HCT116 (cell line): ENCODE measurements at regions of chr16 and their contacts with region 1.

Region 1: DNA sequence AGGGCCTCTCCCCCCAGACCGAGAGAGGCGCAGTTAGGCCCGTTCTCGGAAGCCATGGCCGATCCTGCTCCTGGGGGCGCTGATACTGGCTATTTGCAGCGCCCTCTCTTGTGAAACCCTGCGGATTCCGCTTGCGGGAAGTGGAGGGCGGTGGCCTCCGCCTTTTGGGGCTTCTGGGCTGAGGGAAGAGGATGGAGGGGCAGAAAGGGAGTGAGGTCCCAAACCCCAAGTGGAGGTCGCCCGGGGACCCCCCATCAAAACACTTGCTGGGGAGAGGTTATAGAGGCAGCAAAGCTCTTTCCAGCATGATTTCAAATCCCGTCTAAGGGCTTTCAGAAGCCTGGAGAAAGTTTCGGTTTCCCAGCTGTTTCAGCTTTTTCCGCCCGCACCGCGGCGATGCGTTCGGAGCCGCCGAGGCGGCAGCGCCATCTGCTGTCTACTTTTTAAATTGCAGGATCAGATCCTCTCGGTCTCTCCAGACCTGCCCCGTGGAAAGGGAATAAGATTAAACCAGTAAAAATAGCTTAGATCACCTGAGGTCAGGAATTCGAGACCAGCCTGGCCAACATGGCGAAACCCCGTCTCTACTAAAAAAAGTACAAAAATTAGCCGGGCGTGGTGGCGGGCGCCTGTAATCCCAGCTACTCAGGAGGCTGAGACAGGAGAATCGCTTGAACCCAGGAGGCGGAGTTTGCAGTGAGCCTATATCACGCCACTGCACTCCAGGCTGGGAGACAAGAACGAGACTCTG is 15.8 kb downstream of the SNX20 start:
- DNase-seq: peak; percentile 41
- ATAC-seq: peak; percentile 93
- H3K4me3 ChIP-seq: peak overlapping the region; percentile 35 to 48
- H3K27ac ChIP-seq: no peak overlapping the region; the same call in 1 of the 2 replicates
- H3K4me1 ChIP-seq: peaks cover 0 to 5% of the 10 kb centered on the region in 2 experiments; a peak in 1 of 4 replicates
- H3K27me3 ChIP-seq: no peaks in the 10 kb centered on the region
- CTCF ChIP-seq: peak; percentile 78 to 90 (median 81)
- POLR2A ChIP-seq: no peak
- RAD21 ChIP-seq: peak; percentile 93

Region 2: DNA sequence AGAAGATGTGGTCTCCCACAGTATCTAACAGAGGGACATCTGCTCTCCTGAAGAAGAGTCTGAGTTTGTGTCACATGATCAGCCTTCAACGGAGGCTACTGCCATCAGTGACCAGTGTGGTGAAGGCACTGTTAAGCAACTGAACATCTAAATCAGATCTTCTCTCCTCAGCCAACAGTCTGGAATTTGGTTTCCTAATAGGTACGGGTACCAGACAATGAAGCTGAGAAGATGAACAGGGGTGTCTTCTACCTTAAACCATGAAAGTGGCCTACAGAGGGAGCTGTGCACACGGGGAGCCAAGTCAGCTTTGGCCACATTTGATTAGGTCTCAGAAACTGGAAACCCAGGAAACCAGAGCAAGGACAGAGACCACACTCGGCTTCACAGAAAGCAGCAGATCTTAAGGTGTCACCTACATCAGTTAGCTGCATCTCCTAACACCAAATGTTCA is 338.3 kb before region 1 on chr16:
- CTCF ChIA-PET with region 1: interaction called, 11 read pairs
- POLR2A ChIA-PET with region 1: no interaction called
- RAD21 ChIA-PET with region 1: interaction called in 1 of 2 experiments, 4 read pairs
- intact Hi-C with region 1: loop called (anchors 5 kb)
- DNase-seq: peak; percentile 31
- ATAC-seq: peak; percentile 81
- H3K4me3 ChIP-seq: no peak overlapping the region
- H3K27ac ChIP-seq: no peak overlapping the region
- H3K4me1 ChIP-seq: no peaks in the 10 kb centered on the region
- H3K27me3 ChIP-seq: no peaks in the 10 kb centered on the region
- CTCF ChIP-seq: peak; percentile 26 to 71 (median 67); a peak in 5 of 6 replicates
- POLR2A ChIP-seq: no peak
- RAD21 ChIP-seq: peak; percentile 57

Region 3: GRCh38 chr16:50373780-50374179 is 291.5 kb before region 1 on chr16:
- CTCF ChIA-PET with region 1: interaction called, 28 read pairs
- POLR2A ChIA-PET with region 1: no interaction called
- RAD21 ChIA-PET with region 1: interaction called in 1 of 2 experiments, 4 read pairs
- intact Hi-C with region 1: loop called (anchors 1 kb)
- DNase-seq: no peak
- ATAC-seq: no peak
- H3K4me3 ChIP-seq: no peak overlapping the region
- H3K27ac ChIP-seq: no peak overlapping the region
- H3K4me1 ChIP-seq: peaks cover 3 to 24% of the 10 kb centered on the region in 2 experiments; a peak in 3 of 4 replicates
- H3K27me3 ChIP-seq: no peaks in the 10 kb centered on the region
- CTCF ChIP-seq: no peak
- POLR2A ChIP-seq: no peak
- RAD21 ChIP-seq: no peak

Region 4: GRCh38 chr16:50747207-50747956 is 82.1 kb after region 1 on chr16:
- CTCF ChIA-PET with region 1: interaction called, 4 read pairs
- POLR2A ChIA-PET with region 1: no interaction called
- RAD21 ChIA-PET with region 1: no interaction called
- intact Hi-C with region 1: loop called (anchors 2 kb)
- DNase-seq: peak; percentile 15
- ATAC-seq: peak; percentile 65
- H3K4me3 ChIP-seq: no peak overlapping the region
- H3K27ac ChIP-seq: no peak overlapping the region
- H3K4me1 ChIP-seq: peaks cover 0 to 7% of the 10 kb centered on the region in 2 experiments; a peak in 1 of 4 replicates
- H3K27me3 ChIP-seq: no peaks in the 10 kb centered on the region
- CTCF ChIP-seq: peak in 2 of 3 experiments; percentile 32 to 52; a peak in 3 of 6 replicates
- POLR2A ChIP-seq: no peak
- RAD21 ChIP-seq: peak; percentile 61